Calu3 (cell line): ENCODE measurements at regions of chr10 and their contacts with region 1.

Region 1: GRCh38 chr10:23067939-23068775 is 27.2 kb upstream of the MSRB2 start:
- DNase-seq: peak; percentile 73
- H3K4me3 Mint-ChIP-seq: no peak overlapping the region
- H3K27ac Mint-ChIP-seq: no peak overlapping the region
- H3K4me1 Mint-ChIP-seq: peaks cover 18% of the 10 kb centered on the region
- H3K27me3 Mint-ChIP-seq: no peaks in the 10 kb centered on the region
- CTCF ChIP-seq: peak; percentile 81

Region 2: DNA sequence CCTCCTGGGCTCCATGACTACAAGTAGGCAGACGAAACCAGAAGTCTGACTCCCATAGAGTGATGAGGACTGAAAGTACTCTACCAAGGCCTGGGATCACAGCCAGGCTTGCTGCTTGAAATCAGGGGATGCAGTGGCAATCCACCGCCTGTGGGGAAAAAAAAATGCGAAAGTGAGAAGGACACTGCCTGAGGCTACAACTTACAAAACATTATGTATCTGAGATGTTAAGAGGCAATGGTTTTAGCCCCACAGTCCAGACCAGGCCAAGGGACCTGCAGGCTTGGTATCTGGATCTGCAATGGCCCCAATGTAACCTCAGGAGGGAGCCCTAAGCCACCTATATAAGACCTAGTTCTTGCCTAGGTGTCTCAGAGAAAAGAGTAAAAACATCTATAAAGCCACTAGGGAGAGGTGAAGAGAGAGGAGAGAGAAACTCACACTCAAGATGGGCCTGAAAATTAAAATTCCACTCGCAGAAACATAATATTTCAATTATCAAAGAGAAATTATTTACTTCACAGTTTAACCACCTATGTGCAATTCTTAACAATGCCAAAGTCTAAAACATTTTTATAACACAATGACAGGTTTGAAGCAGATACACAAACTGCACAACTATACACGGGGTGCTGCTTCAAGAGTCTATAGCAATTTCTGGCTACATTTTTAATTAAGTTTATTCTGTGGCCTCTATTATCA is 1078.6 kb before region 1 on chr10:
- CTCF ChIA-PET with region 1: interaction called, 4 read pairs
- intact Hi-C with region 1: loop called (anchors 5 kb)
- DNase-seq: peak; percentile 41
- H3K4me3 Mint-ChIP-seq: no peak overlapping the region
- H3K27ac Mint-ChIP-seq: no peak overlapping the region
- H3K4me1 Mint-ChIP-seq: no peaks in the 10 kb centered on the region
- H3K27me3 Mint-ChIP-seq: no peaks in the 10 kb centered on the region
- CTCF ChIP-seq: peak; percentile 41

Region 3: GRCh38 chr10:22427890-22428571 is 640.1 kb before region 1 on chr10:
- CTCF ChIA-PET with region 1: no interaction called
- intact Hi-C with region 1: no loop called
- DNase-seq: peak; percentile 43
- H3K4me3 Mint-ChIP-seq: peak overlapping the region; percentile 29
- H3K27ac Mint-ChIP-seq: peak overlapping the region; percentile 79
- H3K4me1 Mint-ChIP-seq: peaks cover 36% of the 10 kb centered on the region
- H3K27me3 Mint-ChIP-seq: no peaks in the 10 kb centered on the region
- CTCF ChIP-seq: no peak

Region 4: GRCh38 chr10:22550732-22551131 is 517.4 kb before region 1 on chr10:
- CTCF ChIA-PET with region 1: no interaction called
- intact Hi-C with region 1: loop called (anchors 5 kb)
- DNase-seq: peak; percentile 61
- H3K4me3 Mint-ChIP-seq: no peak overlapping the region
- H3K27ac Mint-ChIP-seq: no peak overlapping the region
- H3K4me1 Mint-ChIP-seq: no peaks in the 10 kb centered on the region
- H3K27me3 Mint-ChIP-seq: no peaks in the 10 kb centered on the region
- CTCF ChIP-seq: peak; percentile 78

Region 5: DNA sequence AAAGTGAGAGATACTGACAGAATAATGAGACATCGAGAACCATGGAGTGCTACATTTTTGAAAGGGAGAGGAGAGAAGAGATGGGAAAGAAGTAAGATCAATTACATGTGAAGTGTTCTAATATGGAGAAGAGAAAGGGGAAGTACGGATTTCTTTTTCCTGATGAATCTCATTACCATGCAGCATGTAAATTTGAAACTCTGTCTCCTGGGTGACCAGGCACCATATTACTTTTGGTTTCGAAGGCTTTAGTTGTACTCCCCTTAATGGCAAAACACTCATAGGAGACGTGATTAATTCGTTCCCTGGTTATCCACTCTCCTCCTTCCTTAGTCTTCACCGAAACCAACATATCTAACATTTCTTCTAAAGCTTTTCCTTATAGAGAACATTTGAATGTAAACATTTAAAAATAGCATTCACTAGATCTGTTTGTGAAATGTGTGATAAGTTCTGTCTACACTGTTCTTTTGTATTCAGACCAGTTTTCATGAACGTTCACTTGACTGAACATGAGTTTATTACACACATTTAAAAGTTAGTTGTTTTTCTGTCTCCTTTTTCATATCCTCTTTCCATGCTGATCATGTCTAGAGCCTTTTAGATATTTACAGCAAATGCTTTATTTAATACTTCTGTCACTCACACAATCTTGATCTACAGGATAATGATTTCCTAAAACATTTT is 53.0 kb before region 1 on chr10:
- CTCF ChIA-PET with region 1: no interaction called
- intact Hi-C with region 1: no loop called
- DNase-seq: no peak
- H3K4me3 Mint-ChIP-seq: no peak overlapping the region
- H3K27ac Mint-ChIP-seq: no peak overlapping the region
- H3K4me1 Mint-ChIP-seq: no peaks in the 10 kb centered on the region
- H3K27me3 Mint-ChIP-seq: peaks cover 27% of the 10 kb centered on the region
- CTCF ChIP-seq: no peak

Region 6: GRCh38 chr10:23664024-23664423 is 595.9 kb after region 1 on chr10:
- CTCF ChIA-PET with region 1: no interaction called
- intact Hi-C with region 1: no loop called
- DNase-seq: no peak
- H3K4me3 Mint-ChIP-seq: no peak overlapping the region
- H3K27ac Mint-ChIP-seq: no peak overlapping the region
- H3K4me1 Mint-ChIP-seq: no peaks in the 10 kb centered on the region
- H3K27me3 Mint-ChIP-seq: peaks cover 17% of the 10 kb centered on the region
- CTCF ChIP-seq: no peak